ENCODE measurements at regions of chr16 and their contacts with region 1.

Region 1: GRCh38 chr16:46607529-46607928 is 13.7 kb downstream of the SHCBP1 start:
- DNase-seq: no peak
- H3K4me3 ChIP-seq: no peak overlapping the region
- H3K27ac ChIP-seq: no peak overlapping the region
- H3K4me1 ChIP-seq: no peaks in the 10 kb centered on the region
- H3K27me3 ChIP-seq: no peaks in the 10 kb centered on the region
- CTCF ChIP-seq: peak in 1 of 3 experiments; percentile 41

Region 2: DNA sequence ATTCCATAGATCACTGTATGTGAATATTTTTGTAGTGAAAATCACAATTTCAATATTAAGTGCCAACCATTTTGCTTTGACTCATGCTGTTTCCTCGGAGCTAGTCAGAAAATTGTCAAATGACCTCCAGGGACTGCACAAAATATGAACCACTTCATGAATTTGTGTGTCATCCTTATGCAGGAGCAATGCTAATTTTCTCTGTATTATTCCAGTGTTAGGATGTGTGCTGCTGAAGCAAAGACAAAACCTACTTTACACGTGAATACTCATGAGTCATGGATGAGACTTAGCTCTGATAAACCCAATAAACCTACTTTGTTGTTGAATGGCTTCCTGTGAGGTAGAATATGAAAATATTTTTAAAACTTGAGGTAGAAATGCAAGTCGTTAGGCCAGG is 51.6 kb before region 1 on chr16:
- intact Hi-C with region 1: loop called (anchors 2 kb)
- DNase-seq: no peak
- H3K4me3 ChIP-seq: no peak overlapping the region
- H3K27ac ChIP-seq: no peak overlapping the region
- H3K4me1 ChIP-seq: no peaks in the 10 kb centered on the region
- H3K27me3 ChIP-seq: no peaks in the 10 kb centered on the region
- CTCF ChIP-seq: no peak